ENCODE measurements at regions of chr2 and their contacts with region 1.

Region 1: GRCh38 chr2:113157118-113157896 is 16.5 kb upstream of the PSD4 start:
- DNase-seq: peak; percentile 67
- ATAC-seq: peak; percentile 93
- H3K4me3 Mint-ChIP-seq: peak overlapping the region; percentile 80
- H3K27ac Mint-ChIP-seq: peak overlapping the region; percentile 79
- H3K4me1 Mint-ChIP-seq: peaks cover 17% of the 10 kb centered on the region
- H3K27me3 Mint-ChIP-seq: peaks cover 9% of the 10 kb centered on the region

Region 2: DNA sequence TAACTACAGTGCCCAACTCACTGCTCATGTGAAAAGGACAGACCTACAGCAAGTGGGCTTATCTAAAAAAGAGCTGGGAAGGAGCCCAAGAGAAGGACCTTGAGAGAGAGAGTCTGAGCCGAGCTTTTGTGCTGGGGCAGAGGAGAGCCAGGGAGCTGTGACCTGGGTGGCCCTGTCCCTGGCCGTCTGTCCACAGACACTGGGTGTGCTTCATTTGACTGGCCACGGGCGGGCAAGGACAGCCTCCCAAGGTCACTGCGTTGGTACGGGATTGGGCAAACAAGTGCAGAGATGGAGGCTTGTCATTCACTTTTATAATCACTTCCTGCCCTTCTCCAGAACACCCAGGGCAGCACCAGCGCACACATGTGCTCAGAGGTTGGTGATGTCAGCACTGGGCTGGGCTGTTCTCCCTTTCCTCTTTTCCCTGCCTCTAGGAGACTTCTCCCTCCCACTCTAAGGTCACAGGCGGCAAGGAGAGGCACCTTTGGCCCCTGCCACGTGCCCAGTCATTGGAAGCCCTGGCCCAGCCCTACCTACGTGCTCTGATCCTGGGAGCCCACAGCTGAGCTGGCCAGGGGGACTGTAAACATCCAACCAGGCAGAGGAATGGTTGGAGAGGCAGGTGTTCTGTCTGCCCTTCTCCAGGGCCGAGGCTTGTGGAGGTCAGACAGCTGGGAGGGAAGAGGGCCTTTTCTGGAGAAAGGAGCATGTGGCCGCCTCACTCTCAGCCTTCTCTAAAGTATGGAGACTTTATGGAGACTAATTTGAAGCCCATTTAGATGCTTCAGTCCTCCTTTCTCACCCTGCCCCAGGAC is 10.0 kb after region 1 on chr2:
- CTCF ChIA-PET with region 1: interaction called, 12 read pairs
- DNase-seq: peak; percentile 69
- ATAC-seq: peak; percentile 78
- H3K4me3 Mint-ChIP-seq: peak overlapping the region; percentile 63
- H3K27ac Mint-ChIP-seq: peak overlapping the region; percentile 91
- H3K4me1 Mint-ChIP-seq: peaks cover 60% of the 10 kb centered on the region
- H3K27me3 Mint-ChIP-seq: no peaks in the 10 kb centered on the region

Region 3: GRCh38 chr2:113173542-113174395 is 16.5 kb after region 1 on chr2 and contains the start of gene PSD4:
- CTCF ChIA-PET with region 1: interaction called, 48 read pairs
- DNase-seq: peak; percentile 97
- ATAC-seq: peak; percentile 73
- H3K4me3 Mint-ChIP-seq: peak within 1 kb of the TSS; percentile 89
- H3K27ac Mint-ChIP-seq: peak within 1 kb of the TSS; percentile 93
- H3K4me1 Mint-ChIP-seq: peaks cover 69% of the 10 kb centered on the region
- H3K27me3 Mint-ChIP-seq: peaks cover 3% of the 10 kb centered on the region
- total RNA-seq, gene PSD4: 314 to 388 TPM

Region 4: DNA sequence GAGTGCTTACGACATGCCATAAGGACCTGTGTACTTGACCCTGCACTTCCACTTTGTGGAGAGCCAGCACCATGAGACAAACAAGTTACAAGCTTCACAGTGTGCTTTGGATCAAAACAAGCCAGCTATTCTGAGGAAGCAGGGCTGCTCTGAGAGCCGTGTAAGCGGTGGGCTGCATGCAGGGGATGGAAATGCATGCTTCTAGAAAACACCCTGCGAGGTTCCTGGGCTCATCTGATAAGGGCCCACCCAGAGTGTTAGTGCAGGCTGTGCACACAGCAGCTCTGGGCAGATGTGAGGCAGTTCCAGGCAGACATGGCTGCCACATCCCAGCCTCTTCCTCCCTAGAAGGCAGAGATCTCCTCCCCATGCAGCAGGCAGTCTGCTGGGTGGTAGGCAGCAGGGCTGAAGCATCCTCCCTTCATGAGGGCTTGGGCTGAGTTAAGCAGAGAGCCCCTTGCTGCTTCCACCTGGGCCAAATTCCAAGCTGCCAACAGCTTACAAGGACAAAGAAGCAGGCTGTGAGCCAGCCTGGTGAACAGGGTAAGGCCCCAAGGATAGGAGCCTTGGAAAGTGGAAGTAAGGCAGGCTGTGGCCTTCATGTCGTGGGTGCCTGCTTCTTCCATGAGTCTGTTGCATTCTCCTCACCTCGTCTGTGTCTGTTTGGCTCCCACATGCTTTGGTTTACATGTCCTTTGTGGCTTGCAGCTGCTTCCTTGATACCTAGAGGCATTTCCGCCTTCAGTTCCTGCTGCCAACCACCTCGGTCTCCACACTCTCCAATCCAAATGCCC is 24.1 kb after region 1 on chr2:
- CTCF ChIA-PET with region 1: interaction called, 48 read pairs
- DNase-seq: no peak
- ATAC-seq: peak; percentile 25
- H3K4me3 Mint-ChIP-seq: peak overlapping the region; percentile 89
- H3K27ac Mint-ChIP-seq: peak overlapping the region; percentile 87
- H3K4me1 Mint-ChIP-seq: peaks cover 93% of the 10 kb centered on the region
- H3K27me3 Mint-ChIP-seq: no peaks in the 10 kb centered on the region

Region 5: DNA sequence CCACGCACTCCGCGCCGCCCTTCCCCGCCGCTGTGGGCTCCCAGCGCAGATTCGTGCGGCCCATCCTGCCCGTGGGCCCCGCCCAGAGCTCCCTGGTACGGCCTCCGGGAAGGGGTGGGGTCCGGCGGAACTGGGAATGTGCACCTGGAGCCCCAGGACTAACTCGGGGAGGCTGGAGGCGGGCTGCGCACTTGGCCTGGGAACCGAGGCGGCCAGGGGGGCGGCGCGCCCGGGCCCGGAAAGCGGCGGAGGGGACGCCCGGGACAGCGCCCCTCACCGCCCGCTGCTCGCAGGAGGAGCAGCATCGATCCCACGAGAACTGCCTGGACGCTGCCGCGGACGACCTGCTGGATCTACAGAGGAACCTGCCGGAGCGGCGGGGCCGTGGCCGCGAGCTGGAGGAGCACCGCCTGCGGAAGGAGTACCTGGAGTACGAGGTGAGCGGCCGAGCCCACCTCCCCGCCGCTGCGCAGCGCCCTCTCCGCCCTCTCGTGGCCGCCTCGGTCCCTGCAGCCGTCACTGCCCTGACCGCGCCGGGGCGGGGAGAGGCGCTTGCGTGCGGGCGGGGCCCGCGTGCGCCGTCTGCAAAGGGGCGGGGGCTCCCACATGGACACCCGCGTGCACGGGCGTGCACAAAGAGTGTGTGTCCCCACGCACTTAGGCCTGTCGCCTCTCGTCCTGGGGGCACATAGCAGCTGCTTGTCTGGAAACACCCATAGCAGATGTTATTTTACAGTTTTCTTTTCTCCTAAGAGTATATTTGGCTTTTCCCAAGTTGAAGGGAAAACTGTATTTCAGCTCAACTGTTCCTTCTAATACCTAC is 41.7 kb after region 1 on chr2:
- CTCF ChIA-PET with region 1: interaction called, 11 read pairs
- DNase-seq: peak; percentile 85
- ATAC-seq: peak; percentile 81
- H3K4me3 Mint-ChIP-seq: no peak overlapping the region
- H3K27ac Mint-ChIP-seq: peak overlapping the region; percentile 47
- H3K4me1 Mint-ChIP-seq: peaks cover 53% of the 10 kb centered on the region
- H3K27me3 Mint-ChIP-seq: no peaks in the 10 kb centered on the region